ENCODE measurements at regions of chr1 and their contacts with region 1.

Region 1: DNA sequence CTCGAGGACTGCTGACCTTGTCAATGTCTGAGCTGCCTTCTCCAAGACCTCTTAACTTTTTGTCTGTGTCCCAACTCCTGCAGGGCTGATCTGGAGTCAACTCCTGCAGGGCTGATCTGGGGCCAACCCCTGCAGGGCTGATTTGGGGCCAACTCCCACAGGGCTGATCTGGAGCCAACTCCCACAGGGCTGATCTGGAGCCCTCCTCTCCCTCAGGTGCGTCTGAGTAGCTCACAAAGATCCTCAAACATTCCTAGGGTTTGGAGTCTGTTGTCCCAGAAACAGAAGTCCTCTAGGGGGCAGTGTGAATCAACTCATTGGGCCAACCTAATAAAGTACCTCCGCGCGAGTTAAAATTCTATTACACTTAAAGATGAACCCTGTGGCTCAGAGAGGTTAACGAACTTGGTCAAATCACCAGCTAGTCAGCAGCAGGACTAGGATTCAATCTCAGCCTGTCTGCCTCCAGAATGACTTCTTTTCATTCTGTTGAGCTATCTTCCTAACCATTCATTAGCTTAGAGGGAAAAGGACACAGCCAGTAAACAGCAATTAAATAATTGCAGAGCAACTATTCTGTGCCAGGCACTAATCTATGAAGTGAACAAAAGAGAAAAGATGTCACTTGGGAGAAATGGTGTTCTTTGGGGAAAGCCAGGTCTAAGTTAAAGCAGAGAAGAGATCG is 17.2 kb upstream of the RLF start:
- DNase-seq: no peak
- ATAC-seq: peak; percentile 61 to 88 (median 80)
- H3K4me3 ChIP-seq: no peak overlapping the region
- H3K27ac ChIP-seq: no peak overlapping the region
- H3K4me1 ChIP-seq: no peaks in the 10 kb centered on the region
- H3K27me3 ChIP-seq: peaks cover 0 to 28% (median 3%) of the 10 kb centered on the region in 3 donors
- CTCF ChIP-seq: peak; percentile 72

Region 2: DNA sequence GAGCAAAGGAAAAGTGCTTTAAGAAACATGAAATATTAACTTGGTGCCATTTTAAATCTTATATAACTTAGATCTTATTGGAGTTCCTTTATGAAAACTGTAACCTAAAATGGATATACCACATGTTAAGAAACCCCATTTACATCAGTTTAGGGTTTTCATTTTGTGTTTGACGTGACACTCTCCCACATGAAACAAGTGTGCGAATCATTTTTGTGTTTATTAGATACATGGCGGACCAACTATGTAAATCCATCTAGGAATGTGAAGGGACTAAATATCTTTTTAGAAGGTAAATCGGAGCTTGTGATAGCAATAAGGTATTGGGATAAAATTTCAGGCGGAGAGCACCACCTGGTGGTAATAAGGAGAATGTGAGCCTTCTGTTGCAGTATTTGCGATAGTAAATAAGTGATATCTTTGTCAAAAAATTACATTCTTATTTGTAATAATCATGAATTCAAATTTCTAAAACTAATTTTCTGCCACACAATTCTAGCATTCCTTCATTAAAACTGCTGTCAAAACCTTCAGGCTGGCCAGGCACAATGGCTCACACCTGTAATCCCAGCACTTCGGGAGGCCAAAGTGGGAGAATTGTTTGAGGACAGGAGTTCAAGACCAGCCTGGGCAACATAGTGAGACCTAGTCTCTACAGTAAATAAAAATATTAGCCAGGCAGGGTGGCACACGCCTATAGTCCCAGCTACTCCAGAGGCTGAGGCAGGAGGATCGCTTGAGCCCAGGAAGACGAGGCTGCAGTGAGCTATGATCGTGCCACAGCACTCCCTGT is 260.8 kb after region 1 on chr1:
- intact Hi-C with region 1: loop called (anchors 2 to 5 kb)
- DNase-seq: no peak
- ATAC-seq: peak in 2 of 4 donors; percentile 67 to 77
- H3K4me3 ChIP-seq: peak overlapping the region; percentile 13
- H3K27ac ChIP-seq: no peak overlapping the region
- H3K4me1 ChIP-seq: no peaks in the 10 kb centered on the region
- H3K27me3 ChIP-seq: no peaks in the 10 kb centered on the region
- CTCF ChIP-seq: peak; percentile 88